ENCODE measurements at regions of chr14 and their contacts with region 1.

Region 1: DNA sequence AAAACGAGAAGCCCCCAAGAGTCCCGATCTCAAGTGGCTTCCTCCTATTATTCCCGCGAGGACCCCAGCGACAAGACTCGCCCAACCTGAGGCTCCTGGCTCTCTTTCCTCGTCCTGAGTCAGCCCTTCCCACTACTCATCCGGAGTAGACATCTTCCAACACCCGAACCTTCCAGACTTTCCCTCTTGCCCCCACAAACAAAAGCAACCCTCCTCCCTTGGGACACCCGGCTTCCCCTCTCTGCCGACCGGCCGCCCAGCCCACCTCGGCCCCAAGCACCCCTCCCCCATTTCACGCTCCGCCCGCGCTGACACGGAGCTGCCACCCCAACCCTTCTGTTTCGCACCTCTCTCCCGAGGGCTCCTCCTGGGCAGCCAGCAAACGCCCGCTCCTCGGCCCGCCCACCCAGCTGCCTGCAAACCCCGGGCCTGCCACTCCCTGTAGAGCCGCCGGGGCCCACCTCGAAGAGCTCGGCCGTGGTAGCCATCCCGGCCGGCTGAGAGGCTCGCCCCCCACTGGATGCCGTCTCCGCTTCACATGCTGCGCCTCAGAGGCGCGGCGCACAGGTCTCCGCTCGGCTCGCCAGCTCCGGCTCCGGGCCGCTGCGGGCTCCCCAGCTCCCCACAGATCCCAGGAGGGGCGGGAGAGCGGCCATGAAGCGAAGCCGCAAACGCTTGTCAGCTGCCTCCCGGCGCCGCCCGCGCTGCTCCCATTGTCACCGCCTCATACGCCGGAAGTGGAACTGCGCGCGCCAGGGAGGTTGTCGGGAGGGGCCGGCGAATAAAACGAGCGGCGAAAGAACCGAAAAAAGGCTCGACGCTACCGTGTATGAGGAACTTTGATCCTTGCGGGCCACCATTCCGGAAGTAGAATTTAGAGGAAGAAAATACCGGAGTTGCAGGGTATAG is at the starts of genes AP5M1 and EXOC5:
- DNase-seq: peak; percentile 98
- H3K4me3 ChIP-seq: peak within 1 kb of the TSS; percentile 47 to 91 (median 83)
- H3K27ac ChIP-seq: peak within 1 kb of the TSS; percentile 91 to 99 (median 97)
- H3K4me1 ChIP-seq: peaks cover 28 to 88% (median 63%) of the 10 kb centered on the region in 6 donors
- H3K27me3 ChIP-seq: no peaks in the 10 kb centered on the region
- CTCF ChIP-seq: peak in 6 of 11 experiments; percentile 2 to 28 (median 18)
- POLR2A ChIP-seq: peak in 2 of 3 donors; percentile 12 to 31
- total RNA-seq, gene AP5M1: 31.5 to 47.9 (median 43.7) TPM
- total RNA-seq, gene EXOC5: 48.6 to 77.2 (median 60.6) TPM

Region 2: DNA sequence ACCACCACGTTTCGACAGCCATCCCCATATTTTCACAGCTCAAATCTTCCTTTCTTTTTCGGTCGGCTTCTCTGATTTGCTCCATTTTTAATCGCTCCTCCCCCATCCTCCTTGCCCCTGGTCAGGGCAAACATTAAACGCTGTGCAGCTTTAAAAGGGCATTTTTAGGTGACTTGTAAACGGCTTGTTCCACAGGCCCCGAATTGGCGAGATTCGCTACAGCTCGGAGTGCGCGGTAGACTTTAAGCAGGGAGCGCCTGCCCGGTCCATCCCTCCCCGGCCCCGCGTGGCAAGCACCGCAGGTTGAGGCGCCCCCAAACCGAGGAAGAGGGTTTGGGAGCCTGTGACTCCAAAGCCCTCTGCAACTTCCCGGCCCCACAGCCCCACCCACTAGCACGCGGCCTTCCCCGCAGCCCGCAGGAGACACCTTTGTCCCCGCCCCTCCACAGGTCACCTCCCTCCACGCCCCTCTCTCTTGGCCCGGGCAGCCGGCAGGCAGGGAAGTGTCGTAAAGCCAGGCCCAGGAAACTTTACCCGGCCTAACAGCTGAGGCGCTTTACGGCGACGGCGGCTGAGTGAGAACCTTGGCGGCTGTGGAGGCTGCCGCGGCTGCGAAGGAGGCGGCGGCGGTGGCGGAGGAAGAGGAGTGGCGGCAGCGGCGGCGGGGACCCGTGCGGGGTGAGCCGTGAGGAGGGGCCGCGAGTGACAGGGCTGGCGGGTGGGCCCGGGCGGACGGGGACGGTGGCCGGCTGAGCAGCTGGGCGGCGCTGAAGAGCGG is 121.8 kb after region 1 on chr14 and contains the start of gene NAA30:
- intact Hi-C with region 1: loop called (anchors 5 kb)
- DNase-seq: peak; percentile 99
- H3K4me3 ChIP-seq: peak within 1 kb of the TSS; percentile 77 to 91 (median 82)
- H3K27ac ChIP-seq: peak within 1 kb of the TSS; percentile 87 to 95 (median 92)
- H3K4me1 ChIP-seq: peaks cover 16 to 54% (median 47%) of the 10 kb centered on the region in 6 donors
- H3K27me3 ChIP-seq: no peaks in the 10 kb centered on the region
- CTCF ChIP-seq: peak in 1 of 11 experiments; percentile 1
- POLR2A ChIP-seq: peak in 2 of 3 donors; percentile 16 to 32
- total RNA-seq, gene NAA30: 13.6 to 24.4 (median 17.9) TPM

Region 3: GRCh38 chr14:57420986-57421385 is 152.6 kb after region 1 on chr14:
- intact Hi-C with region 1: no loop called
- DNase-seq: no peak
- H3K4me3 ChIP-seq: no peak overlapping the region
- H3K27ac ChIP-seq: no peak overlapping the region
- H3K4me1 ChIP-seq: no peaks in the 10 kb centered on the region
- H3K27me3 ChIP-seq: no peaks in the 10 kb centered on the region
- CTCF ChIP-seq: no peak
- POLR2A ChIP-seq: no peak